Naive thymus-derived CD4-positive, alpha-beta T cell (primary cell): ENCODE measurements at regions of chrX and their contacts with region 1.

Region 1: DNA sequence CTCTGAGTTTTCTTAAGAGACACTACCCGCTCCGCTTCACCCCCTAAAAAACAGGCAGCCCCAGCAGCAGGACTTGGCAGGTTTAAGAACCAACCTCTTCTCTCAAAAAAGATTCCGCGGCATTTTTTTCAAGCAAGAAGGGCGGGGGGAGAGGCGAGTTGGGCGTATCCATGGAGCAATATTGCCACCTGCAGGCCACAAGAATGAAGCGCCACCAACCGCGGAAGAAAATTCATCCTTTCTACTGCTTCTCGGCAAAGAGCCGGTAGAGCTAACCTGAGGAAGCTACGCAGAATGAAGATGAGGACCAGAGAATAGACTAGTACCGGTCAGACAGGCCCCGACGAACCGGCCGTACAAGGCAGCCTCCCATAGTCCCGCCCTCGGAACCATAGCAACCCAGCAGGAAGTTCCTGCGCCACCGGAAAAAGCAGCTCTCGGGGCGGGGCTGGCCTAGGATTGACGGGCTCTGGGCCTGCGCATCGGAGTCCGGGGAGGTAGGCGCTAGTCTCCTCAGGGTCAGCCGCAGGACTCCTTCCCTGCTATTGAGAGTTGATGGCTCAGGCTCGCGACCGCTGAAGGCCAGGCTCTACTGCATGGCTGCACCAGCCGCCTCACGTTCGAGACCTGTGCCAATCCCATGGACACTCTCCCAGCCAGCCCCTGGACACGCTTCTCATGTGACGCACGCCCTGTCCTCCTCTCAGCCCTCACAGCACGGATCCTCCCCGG is 76.9 kb downstream of the MAGED4 start:
- DNase-seq: peak; percentile 67 to 93 (median 85)
- ATAC-seq: peak; percentile 96
- H3K4me3 ChIP-seq: peak overlapping the region; percentile 78
- H3K4me3 Mint-ChIP-seq: peak overlapping the region; percentile 87 to 99 (median 96)
- H3K27ac ChIP-seq: peak overlapping the region; percentile 74
- H3K27ac Mint-ChIP-seq: peak overlapping the region; percentile 91 to 99 (median 98)
- H3K4me1 ChIP-seq: peaks cover 0 to 12% of the 10 kb centered on the region in 2 donors
- H3K4me1 Mint-ChIP-seq: peaks cover 5 to 24% (median 16%) of the 10 kb centered on the region in 7 donors
- H3K27me3 ChIP-seq: no peaks in the 10 kb centered on the region
- H3K27me3 Mint-ChIP-seq: peaks cover 10 to 17% (median 12%) of the 10 kb centered on the region in 5 donors

Region 2: GRCh38 chrX:50691820-50692219 is 1569.8 kb before region 1 on chrX:
- CTCF ChIA-PET with region 1: no interaction called
- POLR2A ChIA-PET with region 1: no interaction called
- intact Hi-C with region 1: loop called in 1 of 2 experiments (anchors 5 kb)
- DNase-seq: peak in 7 of 9 donors; percentile 8 to 48 (median 29)
- ATAC-seq: peak; percentile 65
- H3K4me3 ChIP-seq: no peak overlapping the region
- H3K4me3 Mint-ChIP-seq: no peak overlapping the region
- H3K27ac ChIP-seq: no peak overlapping the region
- H3K27ac Mint-ChIP-seq: no peak overlapping the region
- H3K4me1 ChIP-seq: no peaks in the 10 kb centered on the region
- H3K4me1 Mint-ChIP-seq: no peaks in the 10 kb centered on the region
- H3K27me3 ChIP-seq: no peaks in the 10 kb centered on the region
- H3K27me3 Mint-ChIP-seq: peaks cover 0 to 12% (median 10%) of the 10 kb centered on the region in 5 donors

Region 3: DNA sequence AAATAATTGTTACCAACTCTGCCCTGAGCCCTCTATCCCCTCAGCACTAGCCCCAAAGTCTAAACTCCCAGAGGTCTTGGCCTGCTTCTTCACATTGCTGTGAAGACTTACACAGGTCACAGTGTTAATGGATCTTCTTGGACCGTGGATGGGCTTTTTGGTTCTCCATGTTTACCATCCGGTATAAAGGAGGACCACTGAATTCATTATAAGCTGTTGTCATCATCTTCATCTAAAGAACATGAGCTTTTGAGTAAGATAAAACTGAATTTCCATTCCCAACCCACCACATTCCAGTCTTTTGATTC is 773.7 kb before region 1 on chrX:
- CTCF ChIA-PET with region 1: interaction called, 3 read pairs
- POLR2A ChIA-PET with region 1: no interaction called
- intact Hi-C with region 1: loop called in 1 of 2 experiments (anchors 1 kb)
- DNase-seq: no peak
- ATAC-seq: no peak
- H3K4me3 ChIP-seq: no peak overlapping the region
- H3K4me3 Mint-ChIP-seq: no peak overlapping the region
- H3K27ac ChIP-seq: no peak overlapping the region
- H3K27ac Mint-ChIP-seq: no peak overlapping the region
- H3K4me1 ChIP-seq: no peaks in the 10 kb centered on the region
- H3K4me1 Mint-ChIP-seq: no peaks in the 10 kb centered on the region
- H3K27me3 ChIP-seq: no peaks in the 10 kb centered on the region
- H3K27me3 Mint-ChIP-seq: no peaks in the 10 kb centered on the region

Region 4: GRCh38 chrX:51614353-51615012 is 647.1 kb before region 1 on chrX:
- CTCF ChIA-PET with region 1: no interaction called
- POLR2A ChIA-PET with region 1: no interaction called
- intact Hi-C with region 1: loop called in 1 of 2 experiments (anchors 1 kb)
- DNase-seq: peak in 5 of 9 donors; percentile 2 to 24 (median 18)
- ATAC-seq: no peak
- H3K4me3 ChIP-seq: no peak overlapping the region
- H3K4me3 Mint-ChIP-seq: no peak overlapping the region
- H3K27ac ChIP-seq: no peak overlapping the region
- H3K27ac Mint-ChIP-seq: no peak overlapping the region
- H3K4me1 ChIP-seq: no peaks in the 10 kb centered on the region
- H3K4me1 Mint-ChIP-seq: peaks cover 0 to 8% (median 3%) of the 10 kb centered on the region in 7 donors
- H3K27me3 ChIP-seq: no peaks in the 10 kb centered on the region
- H3K27me3 Mint-ChIP-seq: peaks cover 17 to 38% (median 30%) of the 10 kb centered on the region in 5 donors

Region 5: GRCh38 chrX:51802917-51803688 is 458.5 kb before region 1 on chrX:
- CTCF ChIA-PET with region 1: no interaction called
- POLR2A ChIA-PET with region 1: interaction called, 3 read pairs
- intact Hi-C with region 1: loop called (anchors 2 kb)
- DNase-seq: peak; percentile 6 to 61 (median 46)
- ATAC-seq: peak; percentile 90
- H3K4me3 ChIP-seq: peak overlapping the region; percentile 63
- H3K4me3 Mint-ChIP-seq: peak overlapping the region; percentile 93 to 99 (median 96)
- H3K27ac ChIP-seq: peak overlapping the region; percentile 74
- H3K27ac Mint-ChIP-seq: peak overlapping the region; percentile 93 to 99 (median 98)
- H3K4me1 ChIP-seq: peaks cover 5 to 8% of the 10 kb centered on the region in 2 donors
- H3K4me1 Mint-ChIP-seq: peaks cover 6 to 48% (median 27%) of the 10 kb centered on the region in 7 donors
- H3K27me3 ChIP-seq: no peaks in the 10 kb centered on the region
- H3K27me3 Mint-ChIP-seq: peaks cover 0 to 5% (median 0%) of the 10 kb centered on the region in 5 donors

Region 6: DNA sequence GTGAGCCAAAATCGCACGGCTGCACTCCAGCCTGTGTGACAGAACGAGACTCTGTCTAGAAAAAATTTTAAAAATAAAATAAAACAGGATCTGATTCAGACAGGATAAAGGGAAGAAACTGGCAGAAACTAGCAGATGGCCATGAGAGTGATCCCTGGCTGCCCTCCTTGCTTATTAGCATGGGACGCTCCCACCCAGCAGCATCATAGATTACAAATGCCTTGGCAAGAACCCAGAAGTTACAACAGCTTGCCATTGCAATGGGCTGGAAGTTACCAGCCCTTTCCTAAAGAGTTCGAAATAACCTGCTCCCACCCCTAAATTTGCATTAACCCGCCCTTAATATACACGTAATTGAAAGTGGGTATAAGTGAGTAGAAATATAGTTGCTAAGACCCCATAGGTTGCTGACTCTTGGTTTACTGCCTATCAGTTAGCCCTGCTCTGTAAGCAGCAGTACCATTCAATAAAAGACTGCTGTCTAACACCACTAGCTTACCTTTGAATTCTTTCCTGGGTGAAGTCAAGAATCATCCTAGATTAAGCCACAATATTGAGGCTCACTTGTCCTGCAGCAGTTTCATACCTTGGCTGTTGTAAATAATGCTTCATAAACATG is 98.1 kb after region 1 on chrX:
- CTCF ChIA-PET with region 1: no interaction called
- POLR2A ChIA-PET with region 1: no interaction called
- intact Hi-C with region 1: no loop called
- DNase-seq: no peak
- ATAC-seq: no peak
- H3K4me3 ChIP-seq: no peak overlapping the region
- H3K4me3 Mint-ChIP-seq: no peak overlapping the region
- H3K27ac ChIP-seq: no peak overlapping the region
- H3K27ac Mint-ChIP-seq: no peak overlapping the region
- H3K4me1 ChIP-seq: no peaks in the 10 kb centered on the region
- H3K4me1 Mint-ChIP-seq: no peaks in the 10 kb centered on the region
- H3K27me3 ChIP-seq: no peaks in the 10 kb centered on the region
- H3K27me3 Mint-ChIP-seq: peaks cover 0 to 12% (median 4%) of the 10 kb centered on the region in 5 donors

Region 7: DNA sequence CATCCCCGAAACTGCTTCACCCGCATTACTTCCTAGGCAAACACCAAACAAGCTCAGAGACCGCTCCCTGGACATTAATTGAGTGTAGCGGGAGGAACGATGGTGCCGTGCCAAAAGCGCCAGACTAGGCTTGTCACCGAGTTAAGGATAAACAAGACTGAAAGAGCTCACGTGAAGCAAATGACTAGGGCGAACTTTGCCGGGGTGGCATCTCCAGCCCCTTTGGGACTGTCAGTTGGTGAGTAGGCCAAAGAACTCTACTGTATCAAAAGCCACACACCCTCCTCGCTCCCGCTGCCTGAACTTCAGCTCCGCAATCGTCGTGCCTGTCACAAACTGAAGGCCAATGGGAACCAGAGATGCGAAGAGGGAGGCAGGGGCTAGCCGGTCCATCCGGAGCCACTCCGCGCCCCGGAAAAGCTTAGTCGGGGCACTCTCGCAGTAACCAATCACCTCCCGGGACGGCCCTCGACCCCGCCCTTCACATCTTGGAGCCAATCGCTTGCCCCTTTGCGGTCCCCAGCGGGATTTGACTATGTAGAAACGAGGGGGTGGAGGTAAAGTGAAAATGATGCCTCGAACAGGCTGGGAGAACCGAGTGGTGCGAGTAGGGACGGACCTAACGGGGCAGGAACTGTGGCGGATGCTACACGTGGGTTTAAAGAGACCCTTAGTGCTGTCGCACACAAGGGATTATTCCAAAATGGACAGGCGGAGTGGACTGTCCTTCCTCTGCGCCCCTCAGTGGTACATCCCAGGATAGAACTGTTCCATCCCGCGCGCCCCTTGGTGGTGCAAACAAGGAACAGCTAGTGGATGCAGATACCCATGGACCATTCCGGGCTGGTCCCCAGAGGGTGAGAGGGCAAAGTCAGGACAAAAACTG is 733.7 kb after region 1 on chrX:
- CTCF ChIA-PET with region 1: no interaction called
- POLR2A ChIA-PET with region 1: no interaction called
- intact Hi-C with region 1: loop called in 1 of 2 experiments (anchors 1 kb)
- DNase-seq: peak; percentile 67 to 94 (median 91)
- ATAC-seq: peak; percentile 98
- H3K4me3 ChIP-seq: peak overlapping the region; percentile 92
- H3K4me3 Mint-ChIP-seq: peak overlapping the region; percentile 84 to 98 (median 94)
- H3K27ac ChIP-seq: peak overlapping the region; percentile 84
- H3K27ac Mint-ChIP-seq: peak overlapping the region; percentile 97 to 100 (median 99)
- H3K4me1 ChIP-seq: peaks cover 7 to 12% of the 10 kb centered on the region in 2 donors
- H3K4me1 Mint-ChIP-seq: peaks cover 11 to 25% (median 19%) of the 10 kb centered on the region in 7 donors
- H3K27me3 ChIP-seq: no peaks in the 10 kb centered on the region
- H3K27me3 Mint-ChIP-seq: peaks cover 0 to under 1% (median 0%) of the 10 kb centered on the region in 5 donors